Posterior vena cava (tissue), 2 donors: ENCODE measurements at regions of chr18 and their contacts with region 1.

Region 1: DNA sequence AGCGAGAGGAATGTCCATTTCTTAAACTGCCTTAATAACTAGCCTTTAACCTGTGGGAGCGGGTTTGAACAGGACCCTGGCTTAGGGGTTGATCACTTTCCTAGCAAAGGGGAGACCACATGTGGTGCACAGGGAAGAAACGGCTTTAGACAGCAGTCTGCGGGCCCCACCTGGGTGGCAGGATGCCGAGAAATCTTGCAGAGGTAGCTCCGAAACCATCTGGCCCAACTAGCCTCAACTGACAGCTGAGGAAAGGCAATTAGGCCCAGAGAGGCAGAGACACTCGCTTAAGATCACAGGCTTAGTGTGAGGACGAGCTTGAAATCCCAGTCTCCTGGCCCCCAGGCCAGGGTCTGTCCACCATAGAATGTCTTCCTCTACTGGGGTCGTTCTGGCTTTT is 89.8 kb downstream of the MRO start:
- DNase-seq: no peak

Region 2: GRCh38 chr18:50682852-50683251 is 47.1 kb before region 1 on chr18:
- intact Hi-C with region 1: no loop called
- DNase-seq: no peak

Region 3: DNA sequence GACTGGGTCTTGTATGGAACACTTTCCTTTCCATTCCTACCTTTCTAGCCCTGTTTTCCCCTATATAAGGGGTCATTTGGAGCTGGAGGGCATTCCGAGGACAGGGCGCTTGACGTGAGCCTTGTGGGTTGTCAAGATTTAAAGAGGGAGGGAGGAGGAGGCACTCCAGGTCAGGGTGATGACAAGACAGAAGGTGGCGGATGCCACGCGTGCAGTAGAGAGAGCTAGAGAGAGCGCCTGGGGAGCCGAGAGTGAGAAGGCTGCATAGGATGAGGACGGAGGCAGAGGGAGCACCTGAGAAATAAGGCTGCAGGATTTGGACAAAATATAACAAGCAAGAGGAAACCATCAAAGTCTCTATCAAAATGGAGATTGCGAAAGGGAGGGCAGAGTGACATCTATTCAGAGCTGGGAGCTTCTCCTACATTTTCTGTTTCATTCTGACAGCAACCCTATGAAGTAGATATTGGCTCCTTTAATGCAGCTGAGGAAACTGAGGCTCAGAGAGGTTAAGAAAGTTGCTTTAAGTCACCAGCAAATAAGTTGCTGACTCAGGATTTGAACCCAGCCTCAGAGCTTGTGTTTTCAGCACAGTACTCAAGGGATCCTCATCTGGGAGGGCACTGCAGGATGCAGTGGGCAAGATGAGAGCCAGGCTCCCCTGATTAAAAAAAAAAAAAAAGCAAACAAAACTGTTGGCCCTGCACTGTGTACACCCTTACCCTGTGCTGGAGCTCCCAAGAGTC is 34.4 kb before region 1 on chr18:
- intact Hi-C with region 1: loop called in 1 of 2 experiments (anchors 1 kb)
- DNase-seq: peak; percentile 23